Motor neuron (in vitro differentiated cells): ENCODE measurements at regions of chr3 and their contacts with region 1.

Region 1: DNA sequence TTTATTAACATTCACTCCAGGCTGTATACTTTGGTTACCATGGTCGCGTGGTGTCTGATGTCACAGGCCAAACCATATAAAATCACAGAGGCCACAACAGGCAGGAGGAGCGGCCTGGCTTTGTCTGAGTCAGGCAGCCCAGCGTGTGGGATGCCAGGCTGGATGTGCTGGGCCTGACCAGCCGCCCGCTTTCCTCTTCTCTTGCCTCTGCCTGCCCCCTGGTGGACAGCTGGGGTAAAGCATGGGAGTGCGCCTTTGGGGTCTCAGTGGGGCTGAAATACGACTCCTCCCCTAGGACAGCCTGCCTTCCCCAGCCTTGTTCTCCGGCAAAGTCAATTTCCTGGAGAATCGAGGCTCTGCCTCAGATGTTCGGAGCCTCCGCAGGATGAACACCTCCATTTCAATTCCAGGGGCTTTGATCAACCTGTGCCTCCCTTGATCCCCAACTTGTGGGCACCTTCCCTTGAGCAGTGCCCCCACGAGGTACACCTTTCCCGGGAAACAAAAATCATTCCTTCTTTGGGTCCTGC is 78.2 kb downstream of the CCNL1 start:
- ATAC-seq: peak; percentile 81 to 98 (median 93)
- H3K4me3 ChIP-seq: no peak overlapping the region
- H3K27ac ChIP-seq: peak overlapping the region in 1 of 2 donors; percentile 33
- H3K4me1 ChIP-seq: peaks cover 26 to 35% of the 10 kb centered on the region in 2 donors

Region 2: GRCh38 chr3:156151824-156152428 is 929.8 kb before region 1 on chr3:
- in situ Hi-C with region 1: loop called in 3 of 9 experiments (anchors 25 kb)
- ATAC-seq: peak; percentile 59 to 95 (median 76)
- H3K4me3 ChIP-seq: no peak overlapping the region
- H3K27ac ChIP-seq: no peak overlapping the region
- H3K4me1 ChIP-seq: peaks cover 5 to 13% of the 10 kb centered on the region in 2 donors

Region 3: DNA sequence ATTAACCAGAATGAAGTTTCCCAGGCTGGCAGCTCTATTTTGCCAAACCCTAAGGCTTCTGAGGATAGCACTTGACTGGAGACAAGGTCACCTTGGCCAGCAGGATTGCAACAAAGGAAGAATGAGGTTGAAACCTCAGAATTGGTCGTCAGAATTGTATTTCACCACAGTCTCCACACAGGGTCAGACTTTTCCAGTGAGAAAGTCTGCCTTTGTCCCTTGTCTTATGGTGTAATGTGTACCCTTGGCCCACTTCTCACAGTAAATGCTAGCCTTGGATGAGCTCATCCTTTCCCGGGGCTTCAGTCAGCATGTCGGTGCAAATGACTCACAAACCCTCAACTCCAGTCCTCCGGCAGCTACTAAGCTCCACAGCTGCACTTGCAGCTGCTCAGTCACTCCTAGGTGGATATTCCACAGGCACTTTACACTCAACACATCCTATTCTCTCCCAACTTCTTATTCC is 546.6 kb before region 1 on chr3:
- in situ Hi-C with region 1: loop called in 2 of 9 experiments (anchors 25 kb)
- ATAC-seq: peak; percentile 74 to 99 (median 96)
- H3K4me3 ChIP-seq: no peak overlapping the region
- H3K27ac ChIP-seq: peak overlapping the region in 1 of 2 donors; percentile 7
- H3K4me1 ChIP-seq: peaks cover 0 to 21% of the 10 kb centered on the region in 2 donors

Region 4: DNA sequence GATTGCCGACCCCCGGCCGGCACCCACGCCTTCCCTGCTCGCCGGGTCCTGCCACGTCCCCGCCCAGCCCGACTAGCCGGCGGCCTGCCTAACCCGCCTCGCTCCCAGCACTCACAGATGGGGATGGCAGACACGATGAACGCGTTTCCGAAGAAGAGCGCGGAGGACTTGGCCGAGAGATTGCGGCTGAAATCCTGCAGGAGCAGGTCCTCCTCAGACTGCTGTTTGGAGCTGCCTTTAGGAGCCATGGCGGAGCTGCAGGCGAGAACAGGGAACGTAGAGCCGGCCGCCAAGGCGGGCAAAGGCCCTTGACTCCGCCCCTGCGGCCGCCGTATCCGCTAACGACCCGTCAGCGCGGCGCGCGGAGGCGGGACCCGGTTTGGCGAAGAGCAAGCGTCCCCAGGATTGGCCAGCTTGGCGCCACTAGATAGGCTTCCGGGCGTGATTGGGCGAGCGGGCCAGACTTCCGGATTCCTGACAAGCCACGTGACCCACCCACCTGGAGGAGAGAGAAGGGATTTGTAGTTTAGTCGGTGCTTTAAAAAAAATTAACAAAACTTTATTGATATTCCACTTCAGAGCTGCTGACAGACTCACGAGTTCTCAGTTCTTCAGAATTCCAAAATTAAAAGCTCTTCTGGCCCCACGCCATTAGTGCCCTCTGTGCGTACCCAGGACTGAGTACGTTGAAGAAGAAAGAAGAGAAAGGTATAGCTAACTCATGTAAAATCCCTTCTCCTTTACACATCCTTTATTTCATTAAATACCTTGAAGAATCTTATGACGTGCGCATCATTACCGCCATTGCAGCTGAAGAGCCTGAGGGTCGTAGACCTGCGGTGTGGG is 526.7 kb before region 1 on chr3 and contains the start of gene SSR3:
- in situ Hi-C with region 1: loop called in 2 of 9 experiments (anchors 25 kb)
- ATAC-seq: peak; percentile 96 to 100 (median 99)
- H3K4me3 ChIP-seq: peak within 1 kb of the TSS; percentile 44 to 85 (median 71)
- H3K27ac ChIP-seq: peak within 1 kb of the TSS; percentile 82 to 93
- H3K4me1 ChIP-seq: peaks cover 8 to 9% of the 10 kb centered on the region in 2 donors
- total RNA-seq, gene SSR3: 62.6 to 195 (median 88.0) TPM

Region 5: GRCh38 chr3:156674046-156674910 is 407.5 kb before region 1 on chr3 and contains the start of gene TIPARP:
- in situ Hi-C with region 1: loop called in 6 of 9 experiments (anchors 10 to 25 kb)
- ATAC-seq: peak; percentile 72 to 93 (median 91)
- H3K4me3 ChIP-seq: peak within 1 kb of the TSS; percentile 51 to 85 (median 60)
- H3K27ac ChIP-seq: peak within 1 kb of the TSS; percentile 64 to 80
- H3K4me1 ChIP-seq: peaks cover 6% of the 10 kb centered on the region in 2 donors
- total RNA-seq, gene TIPARP: 8.0 to 28.4 (median 14.6) TPM

Region 6: GRCh38 chr3:156826144-156826895 is 255.4 kb before region 1 on chr3 and contains the start of gene LEKR1:
- in situ Hi-C with region 1: loop called in 1 of 9 experiments (anchors 10 kb)
- ATAC-seq: peak; percentile 81 to 94 (median 92)
- H3K4me3 ChIP-seq: peak within 1 kb of the TSS; percentile 21 to 45 (median 30)
- H3K27ac ChIP-seq: peak within 1 kb of the TSS in 1 of 2 donors; percentile 29
- H3K4me1 ChIP-seq: no peaks in the 10 kb centered on the region
- total RNA-seq, gene LEKR1: 0.05 to 3.2 (median 1.2) TPM